ENCODE measurements at regions of chr10 and their contacts with region 1.

Region 1: GRCh38 chr10:114173921-114174694 is at the start of gene CCDC186:
- DNase-seq: peak; percentile 98
- ATAC-seq: peak; percentile 98
- H3K4me3 ChIP-seq: peak within 1 kb of the TSS; percentile 85 to 95 (median 88)
- H3K4me3 Mint-ChIP-seq: peak within 1 kb of the TSS; percentile 89
- H3K27ac ChIP-seq: peak within 1 kb of the TSS; percentile 81 to 84
- H3K27ac Mint-ChIP-seq: peak within 1 kb of the TSS; percentile 96
- H3K4me1 ChIP-seq: peaks cover 11 to 13% of the 10 kb centered on the region in 2 donors
- H3K4me1 Mint-ChIP-seq: peaks cover 34% of the 10 kb centered on the region
- H3K27me3 ChIP-seq: no peaks in the 10 kb centered on the region
- H3K27me3 Mint-ChIP-seq: peaks cover 3% of the 10 kb centered on the region
- CTCF ChIP-seq: no peak
- total RNA-seq, gene CCDC186: 31.5 and 33.8 TPM in 2 replicates

Region 2: GRCh38 chr10:113635922-113636321 is 538.2 kb before region 1 on chr10:
- CTCF ChIA-PET with region 1: no interaction called
- POLR2A ChIA-PET with region 1: no interaction called
- intact Hi-C with region 1: no loop called
- DNase-seq: no peak
- ATAC-seq: no peak
- H3K4me3 ChIP-seq: no peak overlapping the region
- H3K4me3 Mint-ChIP-seq: no peak overlapping the region
- H3K27ac ChIP-seq: no peak overlapping the region
- H3K27ac Mint-ChIP-seq: no peak overlapping the region
- H3K4me1 ChIP-seq: no peaks in the 10 kb centered on the region
- H3K4me1 Mint-ChIP-seq: no peaks in the 10 kb centered on the region
- H3K27me3 ChIP-seq: peaks cover 0 to 7% (median 0%) of the 10 kb centered on the region in 4 experiments
- H3K27me3 Mint-ChIP-seq: peaks cover 34% of the 10 kb centered on the region
- CTCF ChIP-seq: no peak

Region 3: DNA sequence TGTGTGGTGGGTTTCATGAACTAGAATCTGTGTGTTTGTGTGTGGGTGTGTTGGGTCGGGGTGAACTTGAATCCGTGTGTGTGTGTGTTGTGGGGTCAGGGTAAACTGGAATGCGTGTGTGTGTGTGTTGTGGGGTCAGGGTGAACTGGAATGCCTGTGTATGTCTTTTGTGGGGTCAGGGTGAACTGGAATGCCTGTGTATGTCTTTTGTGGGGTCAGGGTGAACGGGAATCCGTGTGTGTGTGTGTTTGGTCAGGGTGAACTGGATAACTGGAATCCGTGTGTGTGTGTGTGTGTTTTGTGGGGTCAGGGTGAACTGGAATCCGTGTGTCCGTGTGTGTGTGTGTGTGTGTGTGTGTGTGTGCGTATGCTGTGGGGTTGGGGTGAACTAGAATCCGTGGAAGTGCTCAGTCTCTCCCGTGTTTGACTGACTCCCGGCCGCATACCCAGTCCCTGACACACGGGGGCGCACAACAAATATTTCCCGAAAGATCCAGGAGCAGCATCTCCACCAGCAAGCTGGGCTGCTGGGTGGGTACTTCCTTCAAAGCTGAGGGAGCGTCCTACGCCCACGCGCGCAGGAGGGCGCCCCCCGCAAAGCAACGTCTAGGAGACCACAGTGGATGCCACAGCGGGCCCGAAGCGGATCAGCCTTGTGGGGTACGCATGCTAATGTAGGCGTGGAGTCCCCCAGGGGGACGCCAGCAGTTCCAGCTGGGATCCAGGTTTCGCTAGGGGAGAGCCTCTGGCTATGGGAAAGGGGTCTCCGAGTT is 495.2 kb before region 1 on chr10:
- CTCF ChIA-PET with region 1: interaction called, 3 read pairs
- POLR2A ChIA-PET with region 1: no interaction called
- intact Hi-C with region 1: loop called (anchors 2 kb)
- DNase-seq: peak; percentile 75
- ATAC-seq: peak; percentile 7
- H3K4me3 ChIP-seq: peak overlapping the region; percentile 51 to 97 (median 87)
- H3K4me3 Mint-ChIP-seq: peak overlapping the region; percentile 99
- H3K27ac ChIP-seq: peak overlapping the region; percentile 85 to 91
- H3K27ac Mint-ChIP-seq: peak overlapping the region; percentile 99
- H3K4me1 ChIP-seq: peaks cover 30 to 31% of the 10 kb centered on the region in 2 donors
- H3K4me1 Mint-ChIP-seq: peaks cover 43% of the 10 kb centered on the region
- H3K27me3 ChIP-seq: no peaks in the 10 kb centered on the region
- H3K27me3 Mint-ChIP-seq: peaks cover 2% of the 10 kb centered on the region
- CTCF ChIP-seq: peak; percentile 59

Region 4: GRCh38 chr10:114024876-114025610 is 149.1 kb before region 1 on chr10:
- CTCF ChIA-PET with region 1: no interaction called
- POLR2A ChIA-PET with region 1: no interaction called
- intact Hi-C with region 1: loop called (anchors 2 kb)
- DNase-seq: peak; percentile 78
- ATAC-seq: peak; percentile 80
- H3K4me3 ChIP-seq: peak overlapping the region in 4 of 5 experiments; percentile 2 to 51 (median 42)
- H3K4me3 Mint-ChIP-seq: peak overlapping the region; percentile 80
- H3K27ac ChIP-seq: peak overlapping the region; percentile 3 to 54
- H3K27ac Mint-ChIP-seq: peak overlapping the region; percentile 62
- H3K4me1 ChIP-seq: peaks cover 24 to 26% of the 10 kb centered on the region in 2 donors
- H3K4me1 Mint-ChIP-seq: peaks cover 27% of the 10 kb centered on the region
- H3K27me3 ChIP-seq: no peaks in the 10 kb centered on the region
- H3K27me3 Mint-ChIP-seq: no peaks in the 10 kb centered on the region
- CTCF ChIP-seq: no peak

Region 5: GRCh38 chr10:114163062-114163461 is 11.0 kb before region 1 on chr10:
- CTCF ChIA-PET with region 1: no interaction called
- POLR2A ChIA-PET with region 1: no interaction called
- intact Hi-C with region 1: no loop called
- DNase-seq: no peak
- ATAC-seq: no peak
- H3K4me3 ChIP-seq: no peak overlapping the region
- H3K4me3 Mint-ChIP-seq: no peak overlapping the region
- H3K27ac ChIP-seq: no peak overlapping the region
- H3K27ac Mint-ChIP-seq: no peak overlapping the region
- H3K4me1 ChIP-seq: no peaks in the 10 kb centered on the region
- H3K4me1 Mint-ChIP-seq: peaks cover 27% of the 10 kb centered on the region
- H3K27me3 ChIP-seq: no peaks in the 10 kb centered on the region
- H3K27me3 Mint-ChIP-seq: no peaks in the 10 kb centered on the region
- CTCF ChIP-seq: no peak

Region 6: GRCh38 chr10:114188001-114188400 is 13.9 kb after region 1 on chr10:
- CTCF ChIA-PET with region 1: no interaction called
- POLR2A ChIA-PET with region 1: no interaction called
- intact Hi-C with region 1: no loop called
- DNase-seq: peak; percentile 15
- ATAC-seq: no peak
- H3K4me3 ChIP-seq: no peak overlapping the region
- H3K4me3 Mint-ChIP-seq: no peak overlapping the region
- H3K27ac ChIP-seq: no peak overlapping the region
- H3K27ac Mint-ChIP-seq: no peak overlapping the region
- H3K4me1 ChIP-seq: peaks cover 6 to 8% of the 10 kb centered on the region in 2 donors
- H3K4me1 Mint-ChIP-seq: peaks cover 8% of the 10 kb centered on the region
- H3K27me3 ChIP-seq: no peaks in the 10 kb centered on the region
- H3K27me3 Mint-ChIP-seq: peaks cover 11% of the 10 kb centered on the region
- CTCF ChIP-seq: no peak

Region 7: GRCh38 chr10:114367041-114367818 is 193.1 kb after region 1 on chr10:
- CTCF ChIA-PET with region 1: no interaction called
- POLR2A ChIA-PET with region 1: no interaction called
- intact Hi-C with region 1: no loop called
- DNase-seq: no peak
- ATAC-seq: no peak
- H3K4me3 ChIP-seq: no peak overlapping the region
- H3K4me3 Mint-ChIP-seq: no peak overlapping the region
- H3K27ac ChIP-seq: no peak overlapping the region
- H3K27ac Mint-ChIP-seq: no peak overlapping the region
- H3K4me1 ChIP-seq: no peaks in the 10 kb centered on the region
- H3K4me1 Mint-ChIP-seq: no peaks in the 10 kb centered on the region
- H3K27me3 ChIP-seq: no peaks in the 10 kb centered on the region
- H3K27me3 Mint-ChIP-seq: no peaks in the 10 kb centered on the region
- CTCF ChIP-seq: no peak

Region 8: DNA sequence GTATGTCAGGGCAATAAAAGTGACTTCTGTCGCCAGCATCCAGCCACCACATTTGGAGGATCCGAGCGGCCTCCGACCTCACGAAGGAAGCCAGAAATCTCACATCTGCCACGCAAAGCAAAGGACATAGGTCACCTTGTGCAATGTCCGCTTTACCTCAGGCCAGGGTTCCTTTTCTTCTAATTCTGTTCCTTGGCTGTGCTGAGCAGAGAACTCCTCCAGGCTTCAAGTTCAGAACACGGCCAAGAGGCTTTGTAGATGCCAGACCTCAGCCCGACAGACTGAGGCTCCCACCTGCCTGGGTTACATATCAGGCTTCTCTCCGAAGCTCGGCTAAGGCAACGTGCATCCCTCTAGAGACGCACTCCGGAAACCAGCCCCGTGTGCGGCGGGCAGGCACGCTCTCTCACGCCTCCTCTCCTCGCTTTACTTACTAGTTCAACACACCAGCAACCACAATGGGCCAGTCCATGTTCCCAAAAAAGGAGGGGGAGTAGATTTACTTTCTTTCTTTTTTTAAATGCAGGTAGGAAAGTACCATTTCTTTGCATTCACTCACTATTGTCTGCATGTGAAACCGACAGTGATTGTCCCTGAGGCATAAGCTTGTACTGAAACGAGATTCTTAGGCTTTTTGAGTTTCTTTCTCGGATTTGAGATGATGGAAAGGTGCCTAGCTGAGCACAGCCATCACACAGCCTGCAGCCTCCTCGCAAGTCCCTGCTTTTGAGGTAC is 352.6 kb after region 1 on chr10:
- CTCF ChIA-PET with region 1: no interaction called
- POLR2A ChIA-PET with region 1: no interaction called
- intact Hi-C with region 1: loop called (anchors 1 kb)
- DNase-seq: peak; percentile 96
- ATAC-seq: peak; percentile 96
- H3K4me3 ChIP-seq: peak overlapping the region; percentile 64 to 84 (median 79)
- H3K4me3 Mint-ChIP-seq: peak overlapping the region; percentile 95
- H3K27ac ChIP-seq: peak overlapping the region; percentile 79 to 96
- H3K27ac Mint-ChIP-seq: peak overlapping the region; percentile 99
- H3K4me1 ChIP-seq: peaks cover 42 to 51% of the 10 kb centered on the region in 2 donors
- H3K4me1 Mint-ChIP-seq: peaks cover 59% of the 10 kb centered on the region
- H3K27me3 ChIP-seq: no peaks in the 10 kb centered on the region
- H3K27me3 Mint-ChIP-seq: no peaks in the 10 kb centered on the region
- CTCF ChIP-seq: no peak

Region 9: DNA sequence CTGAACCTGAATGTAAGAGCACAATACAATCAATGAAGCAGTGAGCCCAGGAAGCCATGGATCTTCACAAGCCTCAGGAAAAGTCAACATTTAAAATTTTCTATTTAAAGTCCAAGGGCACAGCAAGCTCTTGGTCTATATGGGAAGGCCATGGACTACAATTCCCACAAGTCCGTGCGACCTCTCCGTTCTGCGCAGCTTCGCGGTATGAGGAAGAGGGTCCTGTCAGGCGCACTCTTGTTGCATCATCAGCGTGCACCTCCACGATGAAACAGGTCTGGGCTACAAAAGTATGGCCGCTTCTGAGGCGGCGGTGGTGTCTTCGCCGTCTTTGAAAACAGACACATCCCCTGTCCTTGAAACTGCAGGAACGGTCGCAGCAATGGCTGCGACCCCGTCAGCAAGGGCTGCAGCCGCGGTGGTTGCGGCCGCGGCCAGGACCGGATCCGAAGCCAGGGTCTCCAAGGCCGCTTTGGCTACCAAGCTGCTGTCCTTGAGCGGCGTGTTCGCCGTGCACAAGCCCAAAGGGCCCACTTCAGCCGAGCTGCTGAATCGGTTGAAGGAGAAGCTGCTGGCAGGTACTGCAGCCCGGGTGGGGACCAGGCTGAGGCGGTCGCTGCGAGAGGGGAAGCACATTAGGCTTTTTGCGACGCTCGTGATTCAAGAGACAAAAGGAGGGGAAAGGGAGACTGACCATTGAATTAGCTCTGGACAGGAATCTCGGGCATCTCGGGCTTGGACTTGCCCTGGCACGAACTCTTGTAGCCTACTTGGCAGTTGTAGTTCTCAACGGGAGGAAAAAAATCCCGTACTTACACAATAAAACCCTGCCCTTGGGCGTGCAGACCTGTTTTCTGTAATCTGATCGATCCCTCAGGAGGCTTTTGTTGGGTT is 764.1 kb after region 1 on chr10 and contains the start of gene TRUB1:
- CTCF ChIA-PET with region 1: no interaction called
- POLR2A ChIA-PET with region 1: no interaction called
- intact Hi-C with region 1: loop called (anchors 2 kb)
- DNase-seq: peak; percentile 93
- ATAC-seq: peak; percentile 100
- H3K4me3 ChIP-seq: peak within 1 kb of the TSS; percentile 81 to 99 (median 93)
- H3K4me3 Mint-ChIP-seq: peak within 1 kb of the TSS; percentile 95
- H3K27ac ChIP-seq: peak within 1 kb of the TSS; percentile 77 to 83
- H3K27ac Mint-ChIP-seq: peak within 1 kb of the TSS; percentile 92
- H3K4me1 ChIP-seq: peaks cover 15 to 16% of the 10 kb centered on the region in 2 donors
- H3K4me1 Mint-ChIP-seq: peaks cover 34% of the 10 kb centered on the region
- H3K27me3 ChIP-seq: no peaks in the 10 kb centered on the region
- H3K27me3 Mint-ChIP-seq: no peaks in the 10 kb centered on the region
- CTCF ChIP-seq: no peak
- total RNA-seq, gene TRUB1: 11.2 and 15.7 TPM in 2 replicates